ACHN (cell line): ENCODE measurements at regions of chr17 and their contacts with region 1.

Region 1: GRCh38 chr17:34199932-34200534 is 55.1 kb upstream of the CCL2 start:
- DNase-seq: peak; percentile 80

Region 2: GRCh38 chr17:34275881-34276280 is 75.8 kb after region 1 on chr17:
- in situ Hi-C with region 1: no loop called
- DNase-seq: no peak

Region 3: GRCh38 chr17:34306466-34306865 is 106.4 kb after region 1 on chr17:
- in situ Hi-C with region 1: loop called (anchors 25 kb)
- DNase-seq: peak; percentile 58

Region 4: DNA sequence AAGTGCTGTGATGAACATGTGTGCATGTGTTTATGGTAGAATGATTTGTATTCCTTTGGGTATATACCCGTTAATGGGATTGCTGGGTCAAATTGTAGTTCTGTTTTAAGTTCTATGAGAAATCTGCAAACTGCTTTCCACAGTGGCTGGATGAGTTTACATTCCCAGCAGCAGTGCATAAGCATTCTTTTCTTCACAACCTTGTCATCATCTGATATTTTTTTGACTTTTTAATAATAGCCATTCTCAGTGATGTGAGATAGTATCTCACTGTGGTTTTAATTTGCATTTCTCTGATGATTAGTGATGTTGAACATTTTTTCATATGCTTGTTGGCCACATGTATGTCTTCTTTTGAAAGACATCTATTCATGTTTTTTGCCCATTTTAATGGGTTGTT is 137.7 kb after region 1 on chr17:
- in situ Hi-C with region 1: no loop called
- DNase-seq: no peak